GM23248 (cell line): ENCODE measurements at regions of chr11 and their contacts with region 1.

Region 1: GRCh38 chr11:56841210-56841810 is 92.8 kb upstream of the OR9G4 start:
- DNase-seq: peak; percentile 78
- H3K4me3 ChIP-seq: no peak overlapping the region
- H3K27ac ChIP-seq: no peak overlapping the region
- H3K4me1 ChIP-seq: no peaks in the 10 kb centered on the region
- H3K27me3 ChIP-seq: peaks cover 15% of the 10 kb centered on the region

Region 2: GRCh38 chr11:56720513-56720912 is 120.8 kb before region 1 on chr11:
- in situ Hi-C with region 1: no loop called
- DNase-seq: no peak
- H3K4me3 ChIP-seq: no peak overlapping the region
- H3K27ac ChIP-seq: no peak overlapping the region
- H3K4me1 ChIP-seq: no peaks in the 10 kb centered on the region
- H3K27me3 ChIP-seq: no peaks in the 10 kb centered on the region

Region 3: GRCh38 chr11:56967726-56968125 is 126.4 kb after region 1 on chr11:
- in situ Hi-C with region 1: no loop called
- DNase-seq: no peak
- H3K4me3 ChIP-seq: no peak overlapping the region
- H3K27ac ChIP-seq: no peak overlapping the region
- H3K4me1 ChIP-seq: no peaks in the 10 kb centered on the region
- H3K27me3 ChIP-seq: no peaks in the 10 kb centered on the region

Region 4: GRCh38 chr11:57180081-57180561 is 338.8 kb after region 1 on chr11:
- in situ Hi-C with region 1: no loop called
- DNase-seq: no peak
- H3K4me3 ChIP-seq: no peak overlapping the region
- H3K27ac ChIP-seq: no peak overlapping the region
- H3K4me1 ChIP-seq: no peaks in the 10 kb centered on the region
- H3K27me3 ChIP-seq: peaks cover 35% of the 10 kb centered on the region

Region 5: GRCh38 chr11:57240757-57241156 is 399.4 kb after region 1 on chr11:
- in situ Hi-C with region 1: loop called (anchors 5 kb)
- DNase-seq: no peak
- H3K4me3 ChIP-seq: no peak overlapping the region
- H3K27ac ChIP-seq: no peak overlapping the region
- H3K4me1 ChIP-seq: no peaks in the 10 kb centered on the region
- H3K27me3 ChIP-seq: no peaks in the 10 kb centered on the region